ENCODE measurements at regions of chr12 and their contacts with region 1.

Region 1: GRCh38 chr12:110280779-110281548 is at the start of gene ATP2A2:
- DNase-seq: no peak
- H3K4me3 ChIP-seq: peak within 1 kb of the TSS; percentile 95
- CTCF ChIP-seq: no peak

Region 2: DNA sequence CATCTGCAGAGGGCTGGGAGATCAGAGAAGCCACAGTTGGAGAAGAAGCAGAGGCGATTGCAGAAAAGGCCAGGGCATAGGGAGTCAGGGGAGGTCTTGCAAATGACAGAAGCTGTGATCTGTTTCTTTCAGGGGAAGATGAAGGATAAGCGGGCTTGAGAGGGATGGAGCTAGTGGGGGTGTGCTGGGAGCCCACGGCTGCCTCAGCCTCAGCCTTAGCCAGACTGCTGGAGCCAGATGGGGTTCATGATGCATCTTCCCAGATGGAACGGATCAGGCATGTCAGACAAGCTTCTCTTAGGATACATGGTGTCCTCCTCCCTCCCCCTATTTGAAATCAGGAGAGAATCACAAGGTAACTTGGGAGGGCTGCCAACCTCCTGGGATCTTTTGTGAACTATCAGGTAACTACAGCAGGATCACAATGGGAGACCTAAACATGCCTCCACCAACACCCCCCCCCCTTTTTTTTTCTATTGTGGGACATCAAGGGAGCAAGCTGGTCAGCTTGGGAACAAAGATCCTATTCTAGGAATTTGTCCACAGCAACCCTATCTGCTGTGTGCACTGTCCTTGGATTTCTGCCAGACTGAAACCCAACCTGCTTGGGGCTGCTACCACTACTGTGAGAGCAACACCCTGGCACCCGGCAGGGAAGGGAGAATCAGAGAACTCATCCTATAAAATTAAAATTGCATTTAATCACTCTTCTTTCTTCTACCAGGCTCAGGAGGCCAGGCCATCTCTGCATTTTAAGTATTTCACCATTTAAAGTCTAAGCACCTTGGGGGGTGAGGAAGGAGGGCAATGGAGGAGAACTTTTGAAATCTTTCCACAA is 10.6 kb before region 1 on chr12:
- CTCF ChIA-PET with region 1: interaction called, 9 read pairs
- POLR2A ChIA-PET with region 1: interaction called, 20 read pairs
- DNase-seq: no peak
- H3K4me3 ChIP-seq: no peak overlapping the region
- CTCF ChIP-seq: no peak

Region 3: GRCh38 chr12:110330544-110330943 is 49.6 kb after region 1 on chr12:
- CTCF ChIA-PET with region 1: no interaction called
- POLR2A ChIA-PET with region 1: no interaction called
- DNase-seq: peak; percentile 17
- H3K4me3 ChIP-seq: no peak overlapping the region
- CTCF ChIP-seq: no peak

Measured in AG04449 (cell line).